HEK293 (cell line): ENCODE measurements at regions of chr11 and their contacts with region 1.

Region 1: GRCh38 chr11:94563176-94563847 is 3.9 kb upstream of the PIWIL4 start:
- H3K4me3 ChIP-seq: no peak overlapping the region
- H3K27ac ChIP-seq: no peak overlapping the region
- H3K4me1 ChIP-seq: no peaks in the 10 kb centered on the region
- CTCF ChIP-seq: no peak

Region 2: DNA sequence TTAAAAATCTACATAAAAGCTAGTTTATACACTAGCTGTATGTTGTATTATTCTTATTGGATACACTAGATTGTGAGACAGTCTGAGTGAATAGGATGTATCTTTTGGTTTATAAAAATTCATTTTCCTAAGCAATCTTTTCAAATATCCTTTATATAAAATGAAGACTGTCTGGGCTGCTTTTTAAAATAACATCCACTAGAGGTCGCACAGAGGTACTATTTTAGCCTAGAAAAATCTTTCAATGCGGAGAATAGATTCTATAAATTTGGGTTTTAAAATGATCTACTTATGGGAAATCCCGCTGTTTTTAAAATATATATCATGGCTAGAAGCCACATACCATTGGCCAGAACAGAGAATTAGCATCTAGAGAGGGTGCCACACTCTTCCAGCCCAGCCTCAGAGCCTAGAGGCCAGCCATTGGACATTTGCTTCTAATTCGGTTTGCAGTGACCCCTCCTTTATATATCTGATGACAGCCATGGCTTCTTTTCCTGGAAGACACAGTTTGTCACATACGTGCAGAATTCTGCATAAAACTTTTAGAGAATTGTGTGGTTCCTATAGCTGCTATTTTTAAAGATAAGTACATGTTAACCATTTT is 43.7 kb before region 1 on chr11:
- CTCF ChIA-PET with region 1: interaction called, 12 read pairs
- POLR2A ChIA-PET with region 1: no interaction called
- H3K4me3 ChIP-seq: no peak overlapping the region
- H3K27ac ChIP-seq: no peak overlapping the region
- H3K4me1 ChIP-seq: no peaks in the 10 kb centered on the region
- CTCF ChIP-seq: no peak